ENCODE measurements at regions of chr4 and their contacts with region 1.

Region 1: DNA sequence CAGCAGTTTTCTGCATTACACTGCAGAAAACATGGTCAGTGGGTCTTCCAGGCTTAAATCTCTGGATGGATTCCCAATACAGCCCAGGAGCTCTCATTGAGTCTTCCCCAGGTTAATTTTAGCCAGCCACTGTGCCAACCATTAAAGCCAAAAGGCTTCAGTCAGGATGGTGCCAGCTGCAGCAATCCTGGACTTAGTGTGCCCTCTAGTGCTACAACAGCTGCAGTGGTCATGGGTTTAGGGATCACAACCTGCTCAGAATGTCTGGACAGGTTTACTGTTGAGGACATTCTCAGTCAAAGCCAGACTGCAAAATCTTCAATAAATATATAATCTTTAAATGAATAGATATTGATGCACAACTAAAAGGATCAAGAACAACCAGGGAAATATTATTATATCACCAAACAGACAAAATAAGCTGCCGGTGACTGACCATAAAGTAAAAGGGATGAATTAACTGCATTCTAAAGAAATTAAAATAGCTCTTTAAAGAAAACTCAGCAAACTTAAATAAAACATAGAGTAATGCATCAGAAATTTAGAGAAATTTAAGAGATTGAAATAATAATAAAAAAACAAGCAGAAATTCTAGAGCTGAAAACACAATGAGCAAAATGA is 639.9 kb downstream of the SPOCK3 start:
- DNase-seq: peak in 1 of 2 experiments; percentile 43
- H3K4me3 ChIP-seq: no peak overlapping the region
- H3K27ac ChIP-seq: no peak overlapping the region
- H3K4me1 ChIP-seq: no peaks in the 10 kb centered on the region
- H3K27me3 ChIP-seq: no peaks in the 10 kb centered on the region
- CTCF ChIP-seq: peak; percentile 66

Region 2: DNA sequence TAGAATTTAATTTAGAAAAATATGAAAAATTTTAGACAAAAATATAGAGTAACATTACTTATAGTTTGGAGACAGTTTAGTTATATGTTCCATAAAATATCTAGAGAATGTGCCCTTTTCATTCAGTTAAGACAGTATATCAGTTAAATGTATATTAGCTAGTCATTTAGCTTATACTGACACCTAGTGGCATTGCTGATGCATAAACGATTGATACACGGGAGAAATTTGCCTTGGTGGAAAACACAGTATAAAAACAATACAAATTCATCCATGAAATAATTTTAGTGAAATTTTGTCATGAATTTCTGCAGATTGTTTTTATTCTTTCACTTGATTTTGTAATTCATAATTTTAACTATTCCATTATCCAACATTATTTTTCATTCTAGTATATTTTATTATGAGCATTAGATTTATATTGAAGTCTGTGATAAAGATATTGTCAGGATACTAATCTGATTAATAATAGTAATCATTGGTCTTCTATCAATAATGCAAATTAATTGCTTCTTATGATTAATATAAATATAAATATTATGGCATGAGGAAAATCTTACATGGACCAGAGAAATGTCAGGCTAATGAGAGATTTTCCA is 502.4 kb before region 1 on chr4:
- CTCF ChIA-PET with region 1: no interaction called
- POLR2A ChIA-PET with region 1: no interaction called
- intact Hi-C with region 1: loop called (anchors 10 kb)
- DNase-seq: no peak
- H3K4me3 ChIP-seq: no peak overlapping the region
- H3K27ac ChIP-seq: no peak overlapping the region
- H3K4me1 ChIP-seq: no peaks in the 10 kb centered on the region
- H3K27me3 ChIP-seq: no peaks in the 10 kb centered on the region
- CTCF ChIP-seq: peak; percentile 73

Region 3: DNA sequence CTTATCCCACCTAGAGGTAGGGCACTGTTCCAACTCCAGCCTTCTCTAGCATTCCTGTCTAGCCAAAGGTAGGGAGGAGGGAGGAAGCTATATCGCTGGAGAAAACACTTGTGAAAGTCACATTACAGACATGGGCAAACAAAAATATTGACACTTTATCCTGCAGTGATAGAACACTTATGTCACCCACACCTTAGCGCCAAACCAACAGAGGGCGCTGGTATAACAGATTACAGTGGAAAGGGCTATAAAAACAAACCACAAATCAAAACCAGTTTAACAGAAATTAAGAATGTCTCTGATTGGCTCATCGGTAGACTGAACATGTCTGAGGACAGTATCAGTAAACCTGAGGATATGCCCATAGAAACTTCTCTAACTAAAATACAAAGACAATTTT is 270.1 kb before region 1 on chr4:
- CTCF ChIA-PET with region 1: interaction called, 3 read pairs
- POLR2A ChIA-PET with region 1: no interaction called
- intact Hi-C with region 1: loop called (anchors 2 kb)
- DNase-seq: peak in 1 of 2 experiments; percentile 14
- H3K4me3 ChIP-seq: no peak overlapping the region
- H3K27ac ChIP-seq: no peak overlapping the region
- H3K4me1 ChIP-seq: no peaks in the 10 kb centered on the region
- H3K27me3 ChIP-seq: no peaks in the 10 kb centered on the region
- CTCF ChIP-seq: peak; percentile 48

Region 4: GRCh38 chr4:166501941-166502382 is 92.5 kb before region 1 on chr4:
- CTCF ChIA-PET with region 1: no interaction called
- POLR2A ChIA-PET with region 1: no interaction called
- intact Hi-C with region 1: loop called (anchors 5 kb)
- DNase-seq: peak in 1 of 2 experiments; percentile 29
- H3K4me3 ChIP-seq: no peak overlapping the region
- H3K27ac ChIP-seq: no peak overlapping the region
- H3K4me1 ChIP-seq: no peaks in the 10 kb centered on the region
- H3K27me3 ChIP-seq: no peaks in the 10 kb centered on the region
- CTCF ChIP-seq: peak; percentile 48; the same call in 1 of the 2 replicates